Gastrocnemius medialis (tissue), 4 donors: ENCODE measurements at regions of chr10 and their contacts with region 1.

Region 1: GRCh38 chr10:103845972-103846371 is 9.4 kb downstream of the SH3PXD2A start:
- DNase-seq: peak in 1 of 2 donors; percentile 46
- ATAC-seq: peak; percentile 18 to 19
- H3K4me3 ChIP-seq: no peak overlapping the region
- H3K27ac ChIP-seq: peak overlapping the region; percentile 74 to 86 (median 82)
- H3K4me1 ChIP-seq: peaks cover 70 to 72% of the 10 kb centered on the region in 2 donors
- H3K27me3 ChIP-seq: no peaks in the 10 kb centered on the region
- CTCF ChIP-seq: no peak
- POLR2A ChIP-seq: no peak

Region 2: DNA sequence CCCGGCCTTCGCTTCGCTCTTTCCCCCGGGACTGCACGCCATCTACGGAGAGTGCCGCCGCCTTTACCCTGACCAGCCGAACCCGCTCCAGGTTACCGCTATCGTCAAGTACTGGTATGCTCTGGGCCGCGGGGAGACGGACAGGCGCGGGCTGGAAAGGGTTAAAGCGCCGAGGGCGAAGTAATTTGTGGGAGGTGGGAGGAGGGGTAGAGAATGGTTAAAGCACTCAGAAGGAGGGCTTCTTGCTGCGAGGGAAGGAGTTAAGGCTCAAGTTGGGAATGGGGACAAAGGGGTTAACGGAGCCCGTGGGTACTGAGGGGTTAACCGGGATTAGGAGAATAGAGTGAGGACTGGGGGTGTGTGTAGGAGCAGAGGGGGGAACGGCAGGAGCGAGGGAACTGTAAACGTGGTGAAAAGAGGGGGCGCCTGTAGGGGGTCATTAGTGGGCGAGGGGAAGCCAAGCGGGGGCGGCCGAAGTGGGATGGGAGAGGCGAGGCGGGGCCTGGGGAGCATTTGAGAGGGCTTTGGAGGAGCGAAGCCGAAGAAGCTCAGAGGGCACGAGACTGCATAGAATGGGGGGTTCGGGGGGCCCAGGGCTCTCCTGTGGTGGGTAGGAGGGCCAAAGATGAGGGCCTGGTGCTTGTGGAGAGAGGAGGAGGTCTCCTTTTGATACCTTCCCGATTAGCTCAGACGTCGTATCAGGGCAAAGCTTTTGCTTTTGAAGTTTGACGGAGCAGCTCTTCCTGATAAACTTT is 1341.6 kb before region 1 on chr10:
- in situ Hi-C with region 1: no loop called
- intact Hi-C with region 1: no loop called
- DNase-seq: no peak
- ATAC-seq: no peak
- H3K4me3 ChIP-seq: peak overlapping the region; percentile 89 to 97 (median 94)
- H3K27ac ChIP-seq: peak overlapping the region; percentile 86 to 99 (median 91)
- H3K4me1 ChIP-seq: peaks cover 60 to 73% of the 10 kb centered on the region in 2 donors
- H3K27me3 ChIP-seq: no peaks in the 10 kb centered on the region
- CTCF ChIP-seq: no peak
- POLR2A ChIP-seq: no peak

Region 3: GRCh38 chr10:103759100-103759781 is 86.7 kb before region 1 on chr10:
- in situ Hi-C with region 1: loop called in 1 of 4 experiments (anchors 10 kb)
- intact Hi-C with region 1: loop called (anchors 5 kb)
- DNase-seq: peak; percentile 76 to 89
- ATAC-seq: peak; percentile 84 to 88
- H3K4me3 ChIP-seq: no peak overlapping the region
- H3K27ac ChIP-seq: peak overlapping the region; percentile 88 to 98 (median 94)
- H3K4me1 ChIP-seq: peaks cover 79 to 80% of the 10 kb centered on the region in 2 donors
- H3K27me3 ChIP-seq: no peaks in the 10 kb centered on the region
- CTCF ChIP-seq: peak in 1 of 5 experiments; percentile 23
- POLR2A ChIP-seq: peak; percentile 41 to 71